ENCODE measurements at regions of chrX and their contacts with region 1.

Region 1: DNA sequence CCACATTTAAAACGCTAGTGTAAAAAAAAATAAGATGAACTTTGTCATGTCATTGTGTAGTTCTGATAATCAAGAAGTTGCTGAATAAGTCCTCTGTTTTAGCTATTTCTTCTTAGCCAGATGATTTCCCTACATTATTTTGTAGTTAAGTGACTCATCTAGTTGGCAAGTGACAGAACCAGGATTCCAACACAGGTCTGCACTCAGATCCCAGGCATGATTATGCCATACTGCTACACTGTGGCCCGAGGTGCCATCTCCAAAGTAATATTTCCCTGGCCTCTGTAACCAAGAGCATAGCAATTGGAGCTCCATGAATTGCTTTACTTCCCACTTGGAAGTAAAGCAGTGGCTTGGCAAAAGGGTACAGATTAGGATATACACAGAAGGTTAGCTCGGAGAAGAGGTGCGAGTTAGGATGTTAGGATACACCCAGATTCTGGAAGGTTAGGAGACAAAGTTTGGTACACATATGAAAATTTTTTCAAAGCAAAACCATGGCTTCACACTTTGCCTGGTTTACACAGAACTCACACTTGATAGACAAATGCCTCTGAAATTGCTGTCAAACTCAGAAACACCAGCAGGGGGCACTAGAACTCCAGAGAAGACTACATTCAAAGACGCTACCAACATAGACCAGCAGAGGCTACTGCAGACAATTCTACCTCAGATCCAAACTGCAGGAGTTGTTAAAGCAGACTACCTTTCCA is 41.4 kb downstream of the SRPX2 start:
- DNase-seq: peak; percentile 25 to 67
- H3K4me3 ChIP-seq: no peak overlapping the region
- H3K27ac ChIP-seq: no peak overlapping the region
- H3K4me1 ChIP-seq: no peaks in the 10 kb centered on the region
- H3K27me3 ChIP-seq: no peaks in the 10 kb centered on the region
- CTCF ChIP-seq: peak in 2 of 3 experiments; percentile 81 to 99; a peak in 3 of 4 replicates
- EP300 ChIP-seq: no peak
- POLR2A ChIP-seq: no peak
- RAD21 ChIP-seq: peak; percentile 90 to 95

Region 2: DNA sequence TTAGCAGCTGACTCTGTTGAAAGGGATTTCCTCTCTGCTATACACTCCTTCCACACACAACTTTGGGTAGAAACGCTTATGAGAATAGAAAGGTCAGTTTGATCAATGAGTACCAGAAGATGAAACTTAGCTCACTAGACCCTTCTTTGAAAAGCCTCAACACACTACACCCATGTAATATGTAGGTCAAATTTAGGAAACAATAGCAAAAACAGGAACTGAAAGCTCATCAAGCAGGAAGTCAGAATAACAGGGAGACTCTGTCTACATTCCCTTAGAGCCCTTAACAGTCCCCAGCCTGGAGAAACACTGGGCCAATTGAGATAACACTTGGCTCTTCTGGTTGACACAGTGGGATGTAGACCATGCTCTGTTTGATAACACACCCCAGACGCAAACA is 10.7 kb before region 1 on chrX:
- CTCF ChIA-PET with region 1: interaction called, 75 read pairs
- POLR2A ChIA-PET with region 1: no interaction called
- DNase-seq: no peak
- H3K4me3 ChIP-seq: no peak overlapping the region
- H3K27ac ChIP-seq: no peak overlapping the region
- H3K4me1 ChIP-seq: no peaks in the 10 kb centered on the region
- H3K27me3 ChIP-seq: no peaks in the 10 kb centered on the region
- CTCF ChIP-seq: no peak
- EP300 ChIP-seq: no peak
- POLR2A ChIP-seq: no peak
- RAD21 ChIP-seq: no peak

Region 3: DNA sequence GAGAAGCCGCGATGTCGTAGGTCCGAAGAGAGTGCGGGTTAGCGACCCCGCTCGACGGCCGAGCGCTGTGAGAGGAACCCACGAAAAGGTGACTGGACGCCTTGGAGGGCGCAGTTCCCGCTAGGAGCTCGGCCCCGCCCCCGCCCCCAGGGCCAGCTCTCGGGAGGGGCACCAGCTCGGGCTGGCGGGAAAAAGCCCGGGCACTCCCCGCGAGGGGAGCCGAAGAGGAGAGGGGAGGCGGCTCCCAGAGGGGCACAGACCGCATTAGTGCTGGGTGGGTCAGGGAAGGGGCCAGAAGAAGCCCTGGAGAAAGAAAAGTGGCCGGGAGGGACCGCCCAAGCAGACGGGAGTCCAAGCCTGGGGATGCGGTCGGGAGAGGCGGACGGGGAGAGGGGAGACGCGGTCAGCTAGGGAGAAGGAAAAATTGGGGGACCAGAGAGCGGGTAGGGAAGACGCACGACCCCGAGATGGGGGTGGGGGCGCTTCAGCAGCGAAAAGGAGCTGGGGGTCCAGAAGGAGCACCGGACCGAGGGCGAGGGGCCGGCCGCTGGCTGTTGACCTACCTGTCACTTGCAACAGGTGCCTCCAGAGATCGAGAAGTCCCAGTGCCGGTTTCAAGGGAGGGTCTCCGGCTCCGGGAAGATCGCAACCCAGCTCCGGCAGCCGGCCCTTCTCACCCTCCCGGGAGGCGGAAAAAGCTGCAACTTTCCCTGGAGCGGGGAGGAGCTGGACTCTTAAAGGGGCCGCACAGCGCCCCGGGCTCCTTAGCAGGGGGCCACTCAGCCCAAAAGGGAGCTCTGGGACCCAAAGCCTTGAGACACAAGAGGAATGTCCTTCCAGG is 46.2 kb after region 1 on chrX and contains the start of gene SYTL4:
- CTCF ChIA-PET with region 1: interaction called, 13 read pairs
- POLR2A ChIA-PET with region 1: no interaction called
- DNase-seq: peak in 1 of 2 experiments; percentile 53
- H3K4me3 ChIP-seq: peak within 1 kb of the TSS; percentile 35 to 70 (median 48)
- H3K27ac ChIP-seq: no peak within 1 kb of the TSS
- H3K4me1 ChIP-seq: no peaks in the 10 kb centered on the region
- H3K27me3 ChIP-seq: peaks cover 5 to 35% (median 21%) of the 10 kb centered on the region in 4 experiments
- CTCF ChIP-seq: peak in 1 of 3 experiments; percentile 1; a peak in 1 of 4 replicates
- EP300 ChIP-seq: no peak
- POLR2A ChIP-seq: no peak
- RAD21 ChIP-seq: no peak
- total RNA-seq, gene SYTL4: 0.11 and 0.19 TPM in 2 replicates

Region 4: GRCh38 chrX:100750883-100751282 is 65.4 kb after region 1 on chrX:
- CTCF ChIA-PET with region 1: interaction called, 11 read pairs
- POLR2A ChIA-PET with region 1: no interaction called
- DNase-seq: no peak
- H3K4me3 ChIP-seq: no peak overlapping the region
- H3K27ac ChIP-seq: no peak overlapping the region
- H3K4me1 ChIP-seq: no peaks in the 10 kb centered on the region
- H3K27me3 ChIP-seq: no peaks in the 10 kb centered on the region
- CTCF ChIP-seq: no peak
- EP300 ChIP-seq: no peak
- POLR2A ChIP-seq: no peak
- RAD21 ChIP-seq: no peak

Region 5: DNA sequence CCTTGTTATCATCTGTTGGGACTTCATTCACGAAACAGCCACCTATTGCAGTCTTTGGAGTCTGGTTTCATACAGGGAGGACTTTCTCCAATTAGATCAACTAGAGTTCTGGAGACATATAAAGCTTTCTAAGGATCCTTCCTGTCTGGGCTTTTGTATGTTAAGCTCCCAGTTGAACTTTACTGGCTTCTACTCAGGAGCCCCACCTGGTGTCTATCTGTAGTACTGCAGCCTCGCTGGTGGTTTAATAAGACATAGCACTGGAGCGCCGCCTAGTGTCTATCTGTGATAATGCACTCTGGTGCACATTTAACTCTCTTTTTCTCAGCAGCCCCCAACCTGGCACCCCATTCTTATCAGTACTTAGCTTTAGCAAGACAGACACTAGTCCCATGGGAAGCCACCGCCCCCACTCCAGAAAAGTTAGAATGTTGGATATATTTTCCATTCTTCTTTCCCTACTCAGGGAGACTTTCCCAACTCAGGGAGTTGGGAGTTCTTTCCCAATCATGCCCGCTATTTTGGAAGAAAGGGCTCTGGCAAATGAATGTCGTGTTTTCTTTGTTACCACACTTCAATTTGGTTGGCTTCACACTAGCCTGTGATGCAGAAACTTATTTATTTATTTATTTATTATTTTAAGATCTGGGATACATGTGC is 83.4 kb after region 1 on chrX:
- CTCF ChIA-PET with region 1: interaction called, 129 read pairs
- POLR2A ChIA-PET with region 1: interaction called, 3 read pairs
- DNase-seq: peak; percentile 23 to 91
- H3K4me3 ChIP-seq: no peak overlapping the region
- H3K27ac ChIP-seq: no peak overlapping the region
- H3K4me1 ChIP-seq: no peaks in the 10 kb centered on the region
- H3K27me3 ChIP-seq: no peaks in the 10 kb centered on the region
- CTCF ChIP-seq: peak; percentile 20 to 100 (median 93)
- EP300 ChIP-seq: no peak
- POLR2A ChIP-seq: no peak
- RAD21 ChIP-seq: peak; percentile 92 to 97